AG04449 (cell line): ENCODE measurements at regions of chr2 and their contacts with region 1.

Region 1: DNA sequence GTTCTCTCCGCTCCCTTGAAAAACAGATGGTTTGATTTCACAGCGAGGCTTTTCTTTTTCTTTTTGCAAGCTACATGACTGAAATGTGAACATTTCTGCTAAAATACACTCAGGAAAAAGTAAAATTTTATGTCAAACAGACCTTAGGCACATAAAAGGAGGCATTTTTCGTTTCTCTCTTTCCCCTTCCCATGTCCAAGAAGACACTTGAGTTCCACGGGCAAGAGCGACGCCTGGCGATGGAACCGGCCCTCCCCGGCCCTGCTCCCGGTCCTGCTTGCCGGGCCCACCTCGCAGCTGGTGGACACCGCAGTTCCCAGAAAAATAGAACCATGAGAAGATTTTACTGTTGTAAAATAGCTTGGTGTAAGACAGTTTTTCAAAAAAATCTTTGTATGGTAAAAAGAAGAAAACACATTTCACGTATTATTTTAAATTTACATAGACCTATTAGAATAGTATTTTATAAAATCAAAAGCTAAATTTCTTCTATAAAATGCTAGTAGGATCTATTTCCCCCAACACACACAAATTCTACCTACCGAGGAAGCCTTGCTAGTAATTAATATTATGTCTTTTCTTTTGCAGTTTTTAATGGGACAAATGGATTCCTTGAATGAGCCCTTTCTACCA is 2.3 kb upstream of the ALKAL2 start:
- DNase-seq: peak; percentile 5
- H3K4me3 ChIP-seq: peak overlapping the region; percentile 54
- CTCF ChIP-seq: peak; percentile 84

Region 2: DNA sequence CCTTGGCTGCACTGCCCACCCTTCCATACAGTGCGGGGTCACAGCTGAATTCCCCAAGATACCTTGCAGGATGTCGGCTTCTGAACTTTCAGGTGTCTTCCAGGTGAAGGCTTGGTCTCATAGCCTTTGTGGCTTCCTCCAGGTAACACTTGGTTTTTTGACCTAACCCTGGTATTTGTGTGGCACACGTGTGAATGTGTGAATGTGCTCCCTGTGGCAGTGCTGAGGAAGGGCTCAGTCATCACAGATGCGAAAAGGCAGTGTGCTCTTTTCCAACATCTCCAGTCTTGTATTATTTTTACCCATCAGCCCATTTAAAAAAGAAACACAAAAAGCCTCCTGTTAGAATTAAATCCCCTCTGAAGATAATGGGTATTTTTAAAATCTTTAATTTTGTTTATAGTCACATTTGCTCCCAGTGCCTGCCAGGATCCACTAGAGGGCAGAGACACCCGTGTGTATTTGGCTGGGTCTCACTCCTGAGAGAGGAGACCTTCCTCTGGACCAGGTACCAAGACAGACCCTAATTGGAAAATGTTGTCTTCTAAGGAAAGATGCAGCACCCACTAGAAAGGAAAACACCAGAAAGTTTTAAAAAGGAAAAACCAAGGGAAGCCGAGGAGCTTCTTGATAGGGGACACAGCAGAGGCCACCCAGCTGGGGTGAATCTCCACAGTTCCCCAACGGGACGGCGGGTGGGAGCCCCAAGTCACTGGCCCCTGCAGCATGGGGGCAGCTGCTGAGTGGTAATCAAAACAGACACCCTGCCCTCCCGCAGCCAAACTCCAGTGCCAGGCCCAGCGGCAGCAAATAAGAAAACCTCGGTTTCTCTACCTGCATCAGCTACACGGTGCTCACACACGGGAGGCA is 271.6 kb before region 1 on chr2:
- CTCF ChIA-PET with region 1: interaction called, 10 read pairs
- POLR2A ChIA-PET with region 1: no interaction called
- DNase-seq: no peak
- H3K4me3 ChIP-seq: no peak overlapping the region
- CTCF ChIP-seq: peak; percentile 5

Region 3: DNA sequence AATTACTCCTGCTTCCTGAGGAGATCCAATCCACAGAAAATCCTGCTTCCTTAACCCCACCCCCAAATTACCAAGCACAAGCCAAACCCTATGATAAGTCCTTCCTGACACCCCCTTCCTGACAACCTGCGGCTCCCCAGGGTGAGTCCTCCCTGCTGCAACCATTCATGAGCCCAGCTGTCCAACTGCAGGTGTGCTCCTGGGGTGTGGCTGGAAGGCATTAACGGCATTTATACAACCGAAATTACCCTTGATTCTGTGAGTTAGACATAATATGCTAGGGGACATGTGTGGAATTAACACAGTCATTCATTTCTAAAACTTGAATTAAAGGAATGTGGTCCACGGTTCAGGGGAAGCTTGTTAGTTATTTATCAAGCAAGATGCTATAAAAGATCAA is 116.7 kb after region 1 on chr2:
- CTCF ChIA-PET with region 1: no interaction called
- POLR2A ChIA-PET with region 1: no interaction called
- DNase-seq: no peak
- H3K4me3 ChIP-seq: no peak overlapping the region
- CTCF ChIP-seq: no peak